Activated CD4-positive, alpha-beta T cell treated with anti-CD3 and anti-CD28 coated beads for 36 hours (primary cell): ENCODE measurements at regions of chr1 and their contacts with region 1.

Region 1: DNA sequence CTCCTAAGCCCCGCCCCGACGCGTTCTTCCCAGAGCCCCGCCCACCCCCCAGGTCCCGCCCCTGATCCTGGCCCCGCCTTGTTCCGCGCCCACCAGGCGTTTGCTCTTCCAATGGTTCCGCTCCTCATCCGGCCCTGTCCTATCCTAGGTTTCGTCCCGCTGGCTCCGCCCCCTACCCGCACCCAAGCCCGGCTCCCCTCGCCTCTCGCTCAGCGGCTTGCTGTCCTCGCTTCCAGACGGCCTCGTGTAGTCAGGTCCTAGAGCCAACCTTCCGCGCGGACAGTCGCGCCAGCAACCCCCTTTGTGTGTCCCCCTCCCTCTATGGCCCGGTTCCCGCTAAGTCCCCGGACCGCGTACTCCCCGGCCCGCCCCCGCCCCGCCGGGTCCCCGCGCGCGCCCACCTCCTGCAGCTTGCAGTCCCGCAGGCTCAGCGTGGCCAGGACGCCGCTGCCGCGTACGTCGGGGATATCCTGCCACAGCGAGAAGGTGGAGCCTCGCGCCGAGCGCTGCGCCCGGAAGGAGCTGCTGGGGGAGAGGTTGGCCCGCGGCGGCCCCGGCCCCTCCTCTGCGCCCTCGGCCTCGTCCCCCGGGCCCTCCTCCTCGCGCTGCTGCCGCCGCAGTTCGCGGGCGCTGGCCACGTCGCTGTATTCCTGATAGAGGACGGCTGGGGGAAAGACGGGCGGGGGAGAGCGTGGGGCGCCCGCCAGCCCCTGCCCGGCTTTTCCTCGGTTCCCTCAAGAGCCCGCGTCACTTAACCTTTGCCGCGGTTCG is 5.7 kb downstream of the ARHGEF19 start:
- DNase-seq: peak; percentile 97
- ATAC-seq: peak; percentile 94
- H3K4me3 Mint-ChIP-seq: peak overlapping the region; percentile 72
- H3K27ac Mint-ChIP-seq: peak overlapping the region; percentile 90
- H3K4me1 Mint-ChIP-seq: peaks cover 9% of the 10 kb centered on the region
- H3K27me3 Mint-ChIP-seq: no peaks in the 10 kb centered on the region

Region 2: GRCh38 chr1:16064536-16065268 is 142.0 kb before region 1 on chr1:
- CTCF ChIA-PET with region 1: no interaction called
- POLR2A ChIA-PET with region 1: no interaction called
- intact Hi-C with region 1: no loop called
- DNase-seq: no peak
- ATAC-seq: no peak
- H3K4me3 Mint-ChIP-seq: no peak overlapping the region
- H3K27ac Mint-ChIP-seq: no peak overlapping the region
- H3K4me1 Mint-ChIP-seq: no peaks in the 10 kb centered on the region
- H3K27me3 Mint-ChIP-seq: peaks cover 6% of the 10 kb centered on the region

Region 3: GRCh38 chr1:16167331-16168143 is 39.2 kb before region 1 on chr1:
- CTCF ChIA-PET with region 1: no interaction called
- POLR2A ChIA-PET with region 1: no interaction called
- intact Hi-C with region 1: loop called in 1 of 2 experiments (anchors 2 kb)
- DNase-seq: peak; percentile 79
- ATAC-seq: peak; percentile 78
- H3K4me3 Mint-ChIP-seq: peak overlapping the region; percentile 44
- H3K27ac Mint-ChIP-seq: no peak overlapping the region
- H3K4me1 Mint-ChIP-seq: peaks cover 49% of the 10 kb centered on the region
- H3K27me3 Mint-ChIP-seq: no peaks in the 10 kb centered on the region

Region 4: DNA sequence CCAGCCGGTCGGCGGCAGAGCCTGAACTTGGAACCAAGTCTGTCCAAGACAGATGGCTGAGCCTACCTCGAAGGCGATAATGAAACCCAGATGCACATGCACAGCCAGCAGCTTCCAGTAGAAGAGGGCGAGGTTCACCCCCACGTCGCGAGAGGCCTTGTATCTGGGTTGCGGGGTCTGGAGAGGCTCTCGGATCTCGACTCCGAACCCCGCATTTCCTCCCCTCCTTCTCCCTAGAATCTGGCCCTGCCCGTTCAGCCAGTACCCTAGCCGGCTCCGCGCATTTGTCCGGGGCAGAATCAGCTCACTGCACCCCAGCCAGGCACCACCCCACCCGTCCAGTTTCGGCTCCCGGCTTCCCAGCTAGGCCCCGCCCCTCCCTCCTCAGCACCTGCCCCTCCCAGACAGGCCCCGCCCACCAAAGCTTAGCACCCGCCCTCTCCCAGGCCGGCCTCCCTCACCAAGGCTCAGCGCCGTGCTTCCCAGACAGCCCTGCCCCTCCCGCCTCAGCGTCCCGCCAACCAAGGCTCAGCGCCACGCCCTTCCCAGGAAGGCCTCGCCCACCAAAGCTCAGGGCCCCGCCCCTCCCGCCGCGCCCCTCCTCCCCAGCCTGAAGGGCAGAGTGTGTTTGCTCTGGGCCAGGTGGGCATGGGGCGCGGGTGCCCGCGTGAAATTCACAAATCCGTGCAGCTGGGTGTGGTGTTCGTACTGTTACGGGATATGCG is 10.5 kb after region 1 on chr1:
- CTCF ChIA-PET with region 1: interaction called, 7 read pairs
- POLR2A ChIA-PET with region 1: interaction called, 14 read pairs
- intact Hi-C with region 1: loop called (anchors 1 kb)
- DNase-seq: peak; percentile 98
- ATAC-seq: peak; percentile 98
- H3K4me3 Mint-ChIP-seq: peak overlapping the region; percentile 73
- H3K27ac Mint-ChIP-seq: peak overlapping the region; percentile 20
- H3K4me1 Mint-ChIP-seq: peaks cover 20% of the 10 kb centered on the region
- H3K27me3 Mint-ChIP-seq: no peaks in the 10 kb centered on the region

Region 5: DNA sequence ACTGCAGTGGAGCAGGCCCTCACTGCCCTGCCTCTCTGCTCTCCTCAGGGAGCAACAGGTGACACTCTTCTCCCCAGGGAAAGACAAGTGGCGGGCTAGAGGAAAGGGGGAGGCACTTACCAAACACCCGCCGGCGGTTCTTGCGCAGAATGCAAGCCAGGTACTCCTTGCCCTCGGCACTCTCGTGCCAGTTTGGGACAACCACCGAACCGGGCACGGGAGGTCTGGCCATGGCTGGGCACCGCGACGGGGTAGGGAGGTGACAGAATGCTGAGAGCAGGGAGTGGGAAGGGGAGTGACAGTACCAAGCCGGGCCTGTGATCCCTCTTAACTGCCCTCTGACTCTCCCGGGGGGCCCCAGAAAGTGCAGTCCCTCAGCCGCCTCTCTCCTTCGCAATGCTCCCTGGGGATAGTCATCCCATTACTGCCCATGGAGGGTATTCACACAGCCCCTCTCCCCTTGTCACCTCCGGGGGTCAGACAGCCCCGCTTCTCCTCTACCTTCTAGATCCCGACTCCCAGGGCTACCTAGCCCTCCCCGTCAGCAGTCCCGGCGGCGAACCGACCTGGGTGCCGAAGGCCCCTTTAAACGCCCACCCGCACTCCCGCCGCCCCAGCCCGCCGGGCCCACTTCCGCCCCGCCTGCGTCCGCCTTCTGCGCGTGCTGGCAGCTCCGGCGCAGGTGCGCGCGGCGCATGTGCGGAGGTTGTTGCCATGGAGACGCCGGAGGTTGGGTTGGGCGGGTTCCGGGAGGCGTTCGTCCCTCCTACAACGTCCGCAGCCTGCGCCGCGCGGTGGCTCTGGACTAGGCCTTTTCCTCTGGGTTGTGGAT is 30.0 kb after region 1 on chr1 and contains the start of gene CPLANE2:
- CTCF ChIA-PET with region 1: interaction called, 3 read pairs
- POLR2A ChIA-PET with region 1: no interaction called
- intact Hi-C with region 1: loop called (anchors 1 to 2 kb)
- DNase-seq: peak; percentile 98
- ATAC-seq: peak; percentile 85
- H3K4me3 Mint-ChIP-seq: peak within 1 kb of the TSS; percentile 81
- H3K27ac Mint-ChIP-seq: peak within 1 kb of the TSS; percentile 85
- H3K4me1 Mint-ChIP-seq: peaks cover 23% of the 10 kb centered on the region
- H3K27me3 Mint-ChIP-seq: no peaks in the 10 kb centered on the region
- total RNA-seq, gene CPLANE2: 2.4 to 3.7 TPM

Region 6: GRCh38 chr1:16243936-16244649 is 37.4 kb after region 1 on chr1:
- CTCF ChIA-PET with region 1: interaction called, 3 read pairs
- POLR2A ChIA-PET with region 1: no interaction called
- intact Hi-C with region 1: loop called (anchors 1 kb)
- DNase-seq: peak; percentile 87
- ATAC-seq: peak; percentile 79
- H3K4me3 Mint-ChIP-seq: no peak overlapping the region
- H3K27ac Mint-ChIP-seq: no peak overlapping the region
- H3K4me1 Mint-ChIP-seq: peaks cover 10% of the 10 kb centered on the region
- H3K27me3 Mint-ChIP-seq: no peaks in the 10 kb centered on the region

Region 7: DNA sequence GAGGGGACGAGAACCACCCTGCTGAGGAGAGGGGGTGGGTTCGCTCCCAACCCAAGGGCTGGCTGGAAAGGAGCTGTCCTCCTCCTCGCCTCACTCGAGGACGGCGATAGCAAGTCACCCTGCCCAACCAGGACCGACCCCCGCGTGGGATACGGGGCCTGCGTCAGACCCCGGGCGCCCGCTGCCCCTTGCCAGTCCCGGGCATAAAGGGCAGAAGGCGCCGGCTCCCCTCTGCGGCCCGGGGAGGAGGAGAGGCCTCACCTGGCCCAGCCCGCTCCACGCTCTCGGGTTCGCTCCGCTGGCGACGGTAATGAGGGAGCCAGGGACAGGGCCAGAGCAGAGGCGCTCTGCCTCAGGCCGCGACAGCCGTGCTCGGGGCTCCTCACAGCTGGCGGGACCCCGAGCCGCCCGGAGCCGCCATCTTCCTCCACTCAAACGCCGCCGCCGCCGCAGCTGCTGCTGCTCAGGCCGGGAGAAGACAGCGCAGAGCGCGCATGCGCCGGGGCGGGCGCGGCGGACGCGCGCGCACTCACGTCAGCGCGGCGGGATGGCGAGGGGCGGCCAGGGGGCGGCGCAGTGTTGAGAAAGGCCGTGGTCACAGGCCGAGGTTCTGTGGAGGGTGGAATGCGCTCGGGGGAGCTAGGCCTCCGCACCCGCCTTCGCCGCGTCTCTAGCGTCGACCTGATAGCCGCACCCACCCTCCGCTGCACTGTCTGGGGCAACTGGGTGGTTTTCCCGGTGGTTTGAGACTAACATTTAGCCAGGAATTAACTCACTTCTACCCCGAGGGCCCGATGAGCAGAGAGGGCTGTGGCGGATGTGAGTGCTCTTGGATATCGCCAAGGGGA is 145.5 kb after region 1 on chr1 and contains the start of gene FBXO42:
- CTCF ChIA-PET with region 1: no interaction called
- POLR2A ChIA-PET with region 1: interaction called, 3 read pairs
- intact Hi-C with region 1: loop called in 1 of 2 experiments (anchors 1 kb)
- DNase-seq: peak; percentile 95
- ATAC-seq: peak; percentile 92
- H3K4me3 Mint-ChIP-seq: peak within 1 kb of the TSS; percentile 96
- H3K27ac Mint-ChIP-seq: peak within 1 kb of the TSS; percentile 96
- H3K4me1 Mint-ChIP-seq: peaks cover 31% of the 10 kb centered on the region
- H3K27me3 Mint-ChIP-seq: no peaks in the 10 kb centered on the region
- total RNA-seq, gene FBXO42: 14.3 to 18.1 TPM

Region 8: GRCh38 chr1:16498573-16499413 is 292.1 kb after region 1 on chr1:
- CTCF ChIA-PET with region 1: no interaction called
- POLR2A ChIA-PET with region 1: no interaction called
- intact Hi-C with region 1: loop called (anchors 1 to 5 kb)
- DNase-seq: peak; percentile 91
- ATAC-seq: peak; percentile 94
- H3K4me3 Mint-ChIP-seq: peak overlapping the region; percentile 74
- H3K27ac Mint-ChIP-seq: no peak overlapping the region
- H3K4me1 Mint-ChIP-seq: peaks cover 10% of the 10 kb centered on the region
- H3K27me3 Mint-ChIP-seq: no peaks in the 10 kb centered on the region